ENCODE measurements at regions of chr3 and their contacts with region 1.

Region 1: DNA sequence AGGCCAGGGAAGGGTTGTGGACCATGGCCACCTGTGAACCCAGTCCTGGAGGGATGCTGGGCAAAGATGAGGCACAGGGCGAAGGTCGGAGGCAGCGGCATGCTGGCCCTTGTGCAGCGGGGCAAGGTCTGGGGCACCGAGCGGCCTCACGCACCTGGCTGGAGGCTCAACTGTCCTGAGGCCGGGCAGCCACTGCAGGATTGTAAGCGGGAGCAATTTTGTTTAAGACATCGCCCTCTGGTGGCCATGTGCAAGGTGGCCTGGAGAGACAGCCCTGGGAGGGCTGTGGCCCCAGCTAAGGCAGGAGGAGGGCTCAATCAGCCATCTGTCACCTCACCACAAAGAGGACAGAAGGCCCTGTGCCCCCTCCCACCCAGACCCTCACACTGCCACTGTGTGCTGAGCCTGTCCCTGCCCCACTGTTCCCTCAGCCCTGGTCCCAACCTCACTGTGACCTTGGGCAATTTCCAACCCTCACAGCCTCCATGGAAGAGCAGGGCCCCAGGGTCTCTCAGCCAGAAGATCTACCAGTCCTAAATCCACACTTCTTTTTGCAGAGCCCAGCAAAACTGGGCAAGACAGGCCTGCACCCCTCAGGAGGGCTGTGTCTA is 46.2 kb downstream of the TPRA1 start:
- DNase-seq: peak; percentile 54 to 94
- H3K4me3 ChIP-seq: no peak overlapping the region
- CTCF ChIP-seq: peak in 1 of 3 donors; percentile 43
- POLR2A ChIP-seq: no peak

Region 2: DNA sequence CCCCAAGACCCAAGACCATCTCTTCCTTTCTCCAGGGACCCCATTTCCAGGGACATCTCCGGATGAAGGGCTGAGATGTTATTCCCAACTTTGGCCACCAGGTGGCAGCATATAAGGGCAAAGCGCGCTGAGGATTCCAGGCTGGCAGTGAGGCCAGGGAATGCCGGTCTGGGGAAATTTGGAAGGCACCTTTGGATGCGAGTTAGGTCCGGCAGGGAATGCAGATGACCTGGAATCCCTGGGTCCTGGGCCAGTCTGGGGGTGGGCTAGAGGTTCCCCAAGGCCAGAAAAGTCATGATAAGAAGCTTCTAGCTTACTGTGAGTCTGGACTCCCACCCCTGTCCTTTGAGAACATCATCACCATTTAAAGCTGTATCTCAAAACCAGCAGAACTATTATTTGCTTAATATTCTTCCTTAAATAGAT is 1021.9 kb before region 1 on chr3:
- intact Hi-C with region 1: loop called (anchors 10 kb)
- DNase-seq: peak; percentile 27 to 90
- H3K4me3 ChIP-seq: no peak overlapping the region
- CTCF ChIP-seq: peak in 1 of 3 donors; percentile 52
- POLR2A ChIP-seq: no peak

Region 3: GRCh38 chr3:126679318-126679751 is 865.0 kb before region 1 on chr3:
- intact Hi-C with region 1: loop called (anchors 5 kb)
- DNase-seq: peak; percentile 73 to 96
- H3K4me3 ChIP-seq: no peak overlapping the region
- CTCF ChIP-seq: peak in 1 of 3 donors; percentile 46
- POLR2A ChIP-seq: no peak

Region 4: DNA sequence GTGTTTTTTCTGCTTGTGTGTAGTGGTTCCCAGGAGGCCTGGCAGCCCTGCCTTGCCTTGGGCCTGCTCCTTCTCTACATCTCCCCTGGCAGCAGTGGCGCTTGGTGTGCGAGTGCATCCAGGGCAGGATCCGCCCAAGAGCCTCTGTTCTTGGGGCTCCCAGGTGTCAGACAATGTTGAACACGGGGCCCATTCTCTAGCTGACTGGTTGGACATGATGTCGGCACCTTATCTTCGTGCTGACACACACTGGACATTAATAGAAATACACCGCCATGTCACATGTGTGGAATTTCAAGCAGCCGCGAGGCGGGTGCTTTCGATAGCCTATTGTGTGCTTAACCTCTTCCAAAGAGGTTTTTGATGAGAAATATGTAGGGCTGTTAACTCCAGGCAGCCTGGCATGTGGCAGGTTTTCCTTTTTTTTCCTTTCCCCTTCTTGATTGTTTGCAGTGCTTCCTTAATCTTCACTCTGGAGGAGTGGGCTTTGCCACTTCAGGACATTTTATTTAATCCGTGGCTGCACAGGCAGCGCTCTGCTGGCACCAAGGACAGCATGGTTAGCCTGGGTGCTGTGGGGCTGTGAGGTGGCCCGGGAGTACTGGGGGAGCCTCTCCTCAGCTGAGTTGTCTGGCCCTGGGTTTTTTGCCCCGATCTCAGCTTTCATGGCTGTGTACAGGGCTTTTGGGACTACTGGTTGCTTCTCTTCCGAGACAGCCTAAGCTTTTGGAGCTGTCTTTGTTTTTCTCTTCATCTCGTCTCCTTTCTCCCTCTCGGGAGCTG is 797.7 kb before region 1 on chr3:
- intact Hi-C with region 1: loop called (anchors 10 kb)
- DNase-seq: no peak
- H3K4me3 ChIP-seq: no peak overlapping the region
- CTCF ChIP-seq: no peak
- POLR2A ChIP-seq: no peak

Region 5: GRCh38 chr3:126982471-126983175 is 561.7 kb before region 1 on chr3 and contains the start of gene PLXNA1:
- intact Hi-C with region 1: loop called (anchors 10 kb)
- DNase-seq: peak; percentile 59 to 96
- H3K4me3 ChIP-seq: peak within 1 kb of the TSS; percentile 64
- CTCF ChIP-seq: peak in 2 of 3 donors; percentile 20 to 57
- POLR2A ChIP-seq: no peak
- total RNA-seq, gene PLXNA1: 35.8 to 44.9 (median 39.7) TPM